Adrenal gland (tissue), 19 donors: ENCODE measurements at regions of chr2 and their contacts with region 1.

Region 1: GRCh38 chr2:147910990-147911473 is 66.2 kb downstream of the ACVR2A start:
- DNase-seq: peak in 5 of 7 donors; percentile 16 to 37 (median 31)
- H3K4me3 ChIP-seq: no peak overlapping the region
- H3K27ac ChIP-seq: no peak overlapping the region
- H3K4me1 ChIP-seq: peaks cover 0 to 13% of the 10 kb centered on the region in 2 donors
- H3K27me3 ChIP-seq: no peaks in the 10 kb centered on the region
- CTCF ChIP-seq: peak; percentile 68 to 87 (median 74)
- POLR2A ChIP-seq: no peak

Region 2: GRCh38 chr2:147082850-147083522 is 828.0 kb before region 1 on chr2:
- intact Hi-C with region 1: loop called in 1 of 2 experiments (anchors 5 kb)
- DNase-seq: peak; percentile 35 to 74 (median 63)
- H3K4me3 ChIP-seq: no peak overlapping the region
- H3K27ac ChIP-seq: no peak overlapping the region
- H3K4me1 ChIP-seq: no peaks in the 10 kb centered on the region
- H3K27me3 ChIP-seq: no peaks in the 10 kb centered on the region
- CTCF ChIP-seq: peak; percentile 64 to 90 (median 82)
- POLR2A ChIP-seq: no peak

Region 3: DNA sequence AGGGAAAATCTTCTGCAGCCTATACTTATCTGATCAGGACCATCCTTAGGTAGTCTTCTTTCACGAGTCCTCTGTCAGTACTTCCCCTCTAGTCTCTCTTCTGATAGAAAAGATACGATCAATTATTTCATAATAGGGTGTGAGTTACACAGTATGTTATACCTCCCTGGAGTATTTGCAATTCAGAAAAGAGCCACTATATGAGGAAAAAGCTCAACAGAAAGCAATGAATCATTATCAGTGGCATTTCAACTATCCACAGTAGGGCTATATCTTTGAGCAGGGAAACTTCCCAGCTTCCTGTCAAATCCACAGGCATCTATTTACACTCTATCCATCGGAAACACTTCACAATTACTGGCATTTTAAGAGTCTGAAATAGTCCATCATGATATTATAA is 171.5 kb before region 1 on chr2:
- intact Hi-C with region 1: no loop called
- DNase-seq: no peak
- H3K4me3 ChIP-seq: no peak overlapping the region
- H3K27ac ChIP-seq: no peak overlapping the region
- H3K4me1 ChIP-seq: peaks cover 0 to 8% of the 10 kb centered on the region in 2 donors
- H3K27me3 ChIP-seq: no peaks in the 10 kb centered on the region
- CTCF ChIP-seq: no peak
- POLR2A ChIP-seq: no peak

Region 4: DNA sequence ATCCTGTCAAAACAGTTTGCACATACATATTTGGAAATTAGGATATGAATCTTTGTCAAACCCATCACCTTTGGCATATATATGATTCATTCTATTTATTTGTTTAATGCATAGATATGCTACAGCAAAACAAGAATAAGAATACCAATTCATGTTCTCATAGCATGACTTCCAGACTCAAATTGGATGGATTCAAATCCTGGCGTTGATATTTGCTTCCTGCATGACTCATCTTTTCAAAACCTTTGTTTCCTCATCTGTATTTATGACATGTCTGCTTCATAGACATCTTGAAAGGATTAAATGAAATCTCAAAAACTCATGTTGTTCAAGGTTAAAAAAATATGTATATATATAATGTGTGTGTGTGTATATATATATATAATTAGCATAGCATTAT is 371.2 kb after region 1 on chr2:
- intact Hi-C with region 1: no loop called
- DNase-seq: no peak
- H3K4me3 ChIP-seq: no peak overlapping the region
- H3K27ac ChIP-seq: no peak overlapping the region
- H3K4me1 ChIP-seq: no peaks in the 10 kb centered on the region
- H3K27me3 ChIP-seq: no peaks in the 10 kb centered on the region
- CTCF ChIP-seq: no peak
- POLR2A ChIP-seq: no peak